Ovary (tissue), 10 donors: ENCODE measurements at regions of chr2 and their contacts with region 1.

Region 1: GRCh38 chr2:51290725-51291124 is 258.8 kb upstream of the NRXN1 start:
- DNase-seq: no peak
- H3K4me3 ChIP-seq: no peak overlapping the region
- H3K27ac ChIP-seq: no peak overlapping the region
- H3K4me1 ChIP-seq: no peaks in the 10 kb centered on the region
- H3K27me3 ChIP-seq: no peaks in the 10 kb centered on the region
- CTCF ChIP-seq: no peak
- EP300 ChIP-seq: no peak
- POLR2A ChIP-seq: no peak

Region 2: GRCh38 chr2:51335087-51336058 is 44.6 kb after region 1 on chr2:
- intact Hi-C with region 1: loop called in 1 of 4 experiments (anchors 10 kb)
- DNase-seq: no peak
- H3K4me3 ChIP-seq: no peak overlapping the region
- H3K27ac ChIP-seq: no peak overlapping the region
- H3K4me1 ChIP-seq: no peaks in the 10 kb centered on the region
- H3K27me3 ChIP-seq: no peaks in the 10 kb centered on the region
- CTCF ChIP-seq: no peak
- EP300 ChIP-seq: no peak
- POLR2A ChIP-seq: no peak

Region 3: DNA sequence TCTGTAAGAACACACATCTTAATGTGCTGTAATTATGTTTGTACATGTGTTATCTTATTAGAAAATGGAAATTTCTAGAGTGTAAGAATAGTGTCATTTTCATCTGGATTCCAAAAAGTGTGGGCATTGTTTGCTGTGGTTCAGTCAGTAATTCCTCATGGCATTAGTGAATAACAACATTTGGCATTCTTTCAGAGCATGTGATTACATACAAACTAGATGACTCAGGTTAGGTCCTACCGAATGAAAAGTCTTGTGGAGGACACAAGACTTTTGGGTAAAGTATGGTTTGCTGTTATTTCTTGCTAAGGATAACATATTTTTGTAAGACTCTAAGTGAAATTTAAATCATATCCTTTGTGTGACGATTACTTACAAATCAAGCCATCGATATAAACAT is 334.3 kb after region 1 on chr2:
- intact Hi-C with region 1: loop called in 1 of 4 experiments (anchors 5 kb)
- DNase-seq: no peak
- H3K4me3 ChIP-seq: no peak overlapping the region
- H3K27ac ChIP-seq: no peak overlapping the region
- H3K4me1 ChIP-seq: no peaks in the 10 kb centered on the region
- H3K27me3 ChIP-seq: no peaks in the 10 kb centered on the region
- CTCF ChIP-seq: no peak
- EP300 ChIP-seq: no peak
- POLR2A ChIP-seq: no peak